Right cardiac atrium (tissue), 5 donors: ENCODE measurements at regions of chr1 and their contacts with region 1.

Region 1: DNA sequence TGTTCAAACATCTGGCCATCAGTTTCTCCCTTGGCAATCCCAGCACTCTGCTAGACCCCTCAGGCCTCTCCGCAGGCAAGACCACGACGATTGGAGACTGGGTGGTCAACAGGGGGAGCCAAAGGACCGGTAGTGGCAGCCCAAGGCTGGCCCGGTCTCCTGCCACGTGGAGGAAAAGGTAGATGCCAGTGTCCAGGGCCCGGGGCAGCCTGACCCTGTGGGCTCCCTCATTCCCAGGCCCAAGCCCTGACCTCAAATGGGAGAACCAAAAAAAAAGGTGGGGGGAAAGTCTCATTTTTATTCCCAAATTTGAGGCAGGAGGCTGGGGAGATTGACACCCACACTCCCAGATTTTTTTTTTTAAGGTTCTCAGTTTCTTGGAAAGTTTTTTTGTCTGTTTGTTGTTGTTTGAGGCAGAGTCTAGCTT is 24.8 kb downstream of the S100A6 start:
- DNase-seq: peak; percentile 85 to 94 (median 91)
- ATAC-seq: peak; percentile 61
- H3K4me3 ChIP-seq: no peak overlapping the region
- H3K27ac ChIP-seq: no peak overlapping the region
- H3K4me1 ChIP-seq: peaks cover 7% of the 10 kb centered on the region
- H3K27me3 ChIP-seq: no peaks in the 10 kb centered on the region

Region 2: DNA sequence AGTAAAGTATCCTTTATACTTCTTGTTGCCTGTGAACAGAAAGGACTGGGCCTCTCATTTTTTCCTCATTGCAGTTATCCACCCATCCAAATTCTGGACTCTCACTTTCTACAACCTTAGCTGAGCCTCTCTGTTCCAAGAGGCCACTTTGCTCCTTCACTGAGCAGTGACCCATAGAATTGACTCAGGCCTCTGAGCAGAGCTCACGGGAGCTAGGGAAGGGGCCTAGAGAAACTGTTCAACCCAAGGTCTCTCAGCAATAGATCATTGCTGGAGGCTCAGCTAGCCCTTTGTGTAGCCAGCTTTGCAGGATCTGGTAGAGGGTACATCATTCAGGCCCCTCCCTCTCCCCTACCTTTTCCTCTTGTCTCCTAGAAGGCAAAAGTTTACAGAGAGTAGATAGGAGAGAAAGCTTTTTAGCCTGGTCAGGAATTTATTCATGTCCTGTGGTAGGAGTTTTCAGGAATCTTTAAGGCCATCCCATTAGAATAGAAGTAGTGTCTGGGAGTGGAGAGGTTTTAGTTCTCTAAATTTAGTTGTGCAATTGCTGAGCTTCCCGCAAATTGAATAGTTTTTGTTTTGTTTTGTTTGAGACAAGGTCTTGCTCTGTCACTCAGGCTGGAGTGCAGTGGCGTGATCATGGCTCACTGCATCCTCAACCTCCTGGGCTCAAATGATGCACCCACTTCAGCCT is 223.5 kb after region 1 on chr1:
- intact Hi-C with region 1: no loop called
- DNase-seq: no peak
- ATAC-seq: no peak
- H3K4me3 ChIP-seq: no peak overlapping the region
- H3K27ac ChIP-seq: no peak overlapping the region
- H3K4me1 ChIP-seq: peaks cover 7% of the 10 kb centered on the region
- H3K27me3 ChIP-seq: no peaks in the 10 kb centered on the region

Region 3: GRCh38 chr1:153749408-153750005 is 238.5 kb after region 1 on chr1:
- intact Hi-C with region 1: loop called in 2 of 4 experiments (anchors 10 kb)
- DNase-seq: peak; percentile 84 to 93 (median 93)
- ATAC-seq: peak; percentile 88 to 92
- H3K4me3 ChIP-seq: no peak overlapping the region
- H3K27ac ChIP-seq: peak overlapping the region; percentile 65
- H3K4me1 ChIP-seq: peaks cover 10% of the 10 kb centered on the region
- H3K27me3 ChIP-seq: no peaks in the 10 kb centered on the region

Region 4: DNA sequence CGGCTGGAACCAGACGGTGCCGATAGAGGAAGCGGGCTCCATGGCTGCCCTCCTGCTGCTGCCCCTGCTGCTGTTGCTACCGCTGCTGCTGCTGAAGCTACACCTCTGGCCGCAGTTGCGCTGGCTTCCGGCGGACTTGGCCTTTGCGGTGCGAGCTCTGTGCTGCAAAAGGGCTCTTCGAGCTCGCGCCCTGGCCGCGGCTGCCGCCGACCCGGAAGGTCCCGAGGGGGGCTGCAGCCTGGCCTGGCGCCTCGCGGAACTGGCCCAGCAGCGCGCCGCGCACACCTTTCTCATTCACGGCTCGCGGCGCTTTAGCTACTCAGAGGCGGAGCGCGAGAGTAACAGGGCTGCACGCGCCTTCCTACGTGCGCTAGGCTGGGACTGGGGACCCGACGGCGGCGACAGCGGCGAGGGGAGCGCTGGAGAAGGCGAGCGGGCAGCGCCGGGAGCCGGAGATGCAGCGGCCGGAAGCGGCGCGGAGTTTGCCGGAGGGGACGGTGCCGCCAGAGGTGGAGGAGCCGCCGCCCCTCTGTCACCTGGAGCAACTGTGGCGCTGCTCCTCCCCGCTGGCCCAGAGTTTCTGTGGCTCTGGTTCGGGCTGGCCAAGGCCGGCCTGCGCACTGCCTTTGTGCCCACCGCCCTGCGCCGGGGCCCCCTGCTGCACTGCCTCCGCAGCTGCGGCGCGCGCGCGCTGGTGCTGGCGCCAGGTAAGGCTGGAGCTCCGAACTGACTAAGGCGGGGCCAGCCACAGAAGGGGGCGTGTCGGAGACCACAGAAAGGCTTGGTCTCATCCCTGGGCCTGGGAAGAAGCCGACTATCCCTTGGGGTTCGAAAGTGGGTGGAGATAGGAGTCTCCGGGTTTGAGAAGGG is 264.7 kb after region 1 on chr1:
- intact Hi-C with region 1: loop called in 1 of 4 experiments (anchors 10 kb)
- DNase-seq: peak; percentile 79 to 90 (median 87)
- ATAC-seq: peak; percentile 28 to 43
- H3K4me3 ChIP-seq: peak overlapping the region; percentile 44
- H3K27ac ChIP-seq: peak overlapping the region; percentile 71
- H3K4me1 ChIP-seq: peaks cover 17% of the 10 kb centered on the region
- H3K27me3 ChIP-seq: no peaks in the 10 kb centered on the region